Right ventricle myocardium inferior (tissue), 1 donor: ENCODE measurements at regions of chr9 and their contacts with region 1.

Region 1: DNA sequence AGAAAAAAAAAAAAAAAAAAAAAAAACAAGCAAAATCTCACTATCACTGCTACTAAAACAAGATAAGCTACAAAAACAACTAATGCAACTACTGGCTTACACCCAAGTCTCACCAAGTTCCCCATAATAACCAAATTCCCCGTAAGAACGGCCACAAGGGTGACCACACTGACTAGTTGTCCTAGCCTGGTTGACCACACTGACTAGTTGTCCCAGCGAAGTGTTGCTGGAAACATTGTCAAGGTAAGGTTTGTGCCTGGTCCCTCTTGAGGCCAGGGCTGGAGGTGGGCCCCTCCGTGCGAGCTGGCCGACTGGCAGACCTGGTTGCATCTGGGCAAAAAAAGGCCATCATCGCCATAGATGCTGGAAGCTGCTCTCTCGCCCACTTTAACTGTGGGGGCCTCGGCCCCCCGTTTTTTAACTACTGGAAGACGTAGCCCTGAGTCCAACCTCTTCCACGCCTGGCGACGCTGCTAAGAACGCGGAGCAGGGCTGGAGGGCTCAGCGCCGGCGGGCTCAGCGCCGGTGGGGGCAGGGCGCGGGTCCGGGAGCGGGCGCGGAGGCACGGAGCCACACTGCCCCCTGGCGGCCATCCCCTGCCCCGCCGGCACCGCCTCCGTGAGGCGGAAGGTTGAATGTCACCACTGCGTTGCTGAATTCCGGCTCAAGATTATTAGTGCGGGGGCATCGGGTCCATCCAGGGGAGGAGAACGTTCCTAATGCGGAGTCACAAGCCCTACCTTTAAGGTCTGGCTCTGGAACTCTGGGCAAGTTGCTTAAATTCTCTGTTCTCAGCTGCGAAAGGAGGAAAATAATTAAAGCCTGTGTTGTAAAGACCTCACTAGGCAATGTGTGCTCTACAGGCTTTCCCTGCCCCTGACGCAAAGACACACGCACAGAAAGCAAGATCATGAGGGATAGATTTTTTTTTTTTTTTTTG is 84.0 kb downstream of the HSD17B3 start:
- DNase-seq: peak; percentile 90
- ATAC-seq: peak; percentile 95

Region 2: GRCh38 chr9:94681508-94681907 is 1536.5 kb before region 1 on chr9:
- intact Hi-C with region 1: loop called (anchors 10 kb)
- DNase-seq: peak; percentile 83
- ATAC-seq: peak; percentile 97

Region 3: GRCh38 chr9:95726756-95727155 is 491.3 kb before region 1 on chr9:
- intact Hi-C with region 1: loop called (anchors 2 kb)
- DNase-seq: no peak
- ATAC-seq: peak; percentile 44

Region 4: DNA sequence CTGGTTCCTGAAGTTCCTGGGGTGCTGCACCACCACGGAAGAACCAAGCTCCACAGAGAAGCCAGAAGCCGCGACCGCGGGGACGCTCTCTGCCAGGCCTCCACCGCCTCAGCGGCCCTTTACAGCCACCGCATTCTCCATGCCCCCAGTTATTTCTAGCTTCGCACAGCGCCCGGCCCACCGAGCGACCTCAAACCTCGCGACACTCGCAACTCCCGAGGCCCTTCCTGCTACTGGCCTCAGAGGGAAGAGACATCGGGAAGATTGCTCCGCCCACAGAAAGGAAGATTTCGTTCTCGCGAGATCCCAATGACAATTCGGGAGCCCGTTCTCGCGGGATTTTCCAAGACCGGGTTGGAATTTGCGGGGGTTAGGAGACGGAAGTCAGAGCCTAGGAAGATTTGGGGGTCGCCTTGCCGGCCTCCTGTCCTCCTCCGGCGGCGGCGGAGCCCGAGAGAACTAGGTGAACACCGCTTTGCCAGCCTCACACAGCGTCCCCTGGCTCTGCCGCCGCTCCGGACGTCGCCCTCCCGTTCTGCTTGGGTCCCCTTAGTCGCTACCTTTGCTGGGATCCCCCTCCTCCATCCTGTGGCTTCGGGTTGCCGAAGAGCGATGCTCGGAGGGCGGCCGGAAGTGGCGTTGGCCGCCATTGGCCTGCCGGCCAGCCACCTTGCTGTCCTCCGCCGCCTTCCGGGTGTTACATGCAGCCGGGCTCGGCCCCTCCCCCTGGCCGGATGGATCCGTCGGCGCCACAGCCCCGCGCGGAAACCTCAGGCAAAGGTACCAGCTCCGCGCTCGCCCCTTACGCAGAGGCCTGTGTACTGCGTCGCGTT is 342.5 kb before region 1 on chr9 and contains the start of gene ERCC6L2:
- intact Hi-C with region 1: loop called (anchors 5 kb)
- DNase-seq: peak; percentile 98
- ATAC-seq: peak; percentile 96
- total RNA-seq, gene ERCC6L2: 20.6 TPM

Region 5: DNA sequence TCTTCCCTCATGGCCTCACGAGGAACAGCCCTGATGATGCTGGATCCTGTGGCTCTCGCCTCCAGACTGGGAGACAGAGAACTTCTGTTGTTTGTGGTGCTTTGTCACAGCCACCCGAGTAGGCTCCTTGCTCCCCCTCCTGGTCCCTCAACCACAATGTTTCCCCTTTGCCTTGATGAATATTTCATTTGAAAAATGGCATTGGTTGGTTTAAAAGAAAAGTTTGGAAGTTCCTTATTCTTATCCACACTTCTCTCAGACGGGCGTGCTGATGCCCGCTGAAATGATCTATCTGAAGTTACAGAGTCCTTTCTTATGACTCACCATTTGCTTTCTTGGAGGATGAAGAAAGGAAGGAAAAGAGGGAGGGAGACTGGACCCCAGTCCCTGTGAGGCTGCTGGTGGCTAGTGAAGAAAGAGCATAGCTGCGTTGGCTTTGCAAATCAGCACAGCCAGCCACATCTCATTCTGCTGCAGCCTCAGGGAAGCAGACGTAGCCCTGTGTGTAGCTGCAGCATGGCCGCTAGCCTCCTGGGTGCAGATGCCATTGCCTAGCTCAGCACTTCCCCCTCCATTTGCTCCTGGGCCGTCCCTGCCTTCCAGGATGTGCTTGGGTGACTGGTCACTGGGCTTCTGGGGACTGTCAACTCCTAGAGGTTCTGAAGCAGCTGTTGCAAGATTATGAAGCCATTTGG is 156.6 kb before region 1 on chr9:
- intact Hi-C with region 1: loop called (anchors 10 kb)
- DNase-seq: no peak
- ATAC-seq: peak; percentile 74

Region 6: DNA sequence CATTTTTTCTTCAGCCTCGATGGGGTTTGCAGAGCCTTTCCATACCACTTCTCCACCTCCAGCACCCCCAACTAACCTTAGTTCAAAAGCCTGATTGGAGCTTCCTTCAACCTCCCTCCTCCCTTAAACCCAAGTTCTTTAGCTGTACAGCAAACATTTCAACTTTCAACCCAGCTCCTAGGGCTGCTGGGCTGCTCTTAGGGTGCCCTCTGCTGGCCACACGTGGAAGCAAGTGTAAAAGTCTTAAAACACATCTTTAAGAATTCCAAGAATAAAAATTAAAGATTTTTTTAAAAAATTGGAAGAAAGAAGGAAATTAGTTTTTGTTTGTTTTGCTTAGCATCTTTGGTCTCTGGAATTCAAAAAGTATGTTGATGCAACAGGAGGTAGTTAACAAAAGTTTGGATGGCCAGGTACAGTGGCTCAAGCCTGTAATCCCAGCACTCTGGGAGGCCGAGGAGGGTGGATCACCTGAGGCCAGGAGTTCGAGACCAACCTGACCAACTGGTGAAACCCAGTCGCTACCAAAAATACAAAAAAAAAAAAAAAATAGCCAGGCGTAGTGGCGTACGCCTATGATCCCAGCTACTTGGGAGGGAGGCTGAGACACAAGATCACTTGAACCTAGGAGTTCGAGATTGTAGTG is 99.4 kb after region 1 on chr9:
- intact Hi-C with region 1: loop called (anchors 5 kb)
- DNase-seq: peak; percentile 72
- ATAC-seq: peak; percentile 67